Endothelial cell of umbilical vein (primary cell): ENCODE measurements at regions of chr1 and their contacts with region 1.

Region 1: GRCh38 chr1:20633190-20634064 is at the start of gene PINK1:
- DNase-seq: peak; percentile 87
- H3K4me3 ChIP-seq: peak within 1 kb of the TSS; percentile 89 to 95 (median 95)
- H3K27ac ChIP-seq: peak within 1 kb of the TSS; percentile 40
- H3K4me1 ChIP-seq: peaks cover 10% of the 10 kb centered on the region
- H3K27me3 ChIP-seq: no peaks in the 10 kb centered on the region
- CTCF ChIP-seq: peak; percentile 97 to 100
- POLR2A ChIP-seq: peak; percentile 60
- total RNA-seq, gene PINK1: 25.6 and 27.3 TPM in 2 replicates

Region 2: DNA sequence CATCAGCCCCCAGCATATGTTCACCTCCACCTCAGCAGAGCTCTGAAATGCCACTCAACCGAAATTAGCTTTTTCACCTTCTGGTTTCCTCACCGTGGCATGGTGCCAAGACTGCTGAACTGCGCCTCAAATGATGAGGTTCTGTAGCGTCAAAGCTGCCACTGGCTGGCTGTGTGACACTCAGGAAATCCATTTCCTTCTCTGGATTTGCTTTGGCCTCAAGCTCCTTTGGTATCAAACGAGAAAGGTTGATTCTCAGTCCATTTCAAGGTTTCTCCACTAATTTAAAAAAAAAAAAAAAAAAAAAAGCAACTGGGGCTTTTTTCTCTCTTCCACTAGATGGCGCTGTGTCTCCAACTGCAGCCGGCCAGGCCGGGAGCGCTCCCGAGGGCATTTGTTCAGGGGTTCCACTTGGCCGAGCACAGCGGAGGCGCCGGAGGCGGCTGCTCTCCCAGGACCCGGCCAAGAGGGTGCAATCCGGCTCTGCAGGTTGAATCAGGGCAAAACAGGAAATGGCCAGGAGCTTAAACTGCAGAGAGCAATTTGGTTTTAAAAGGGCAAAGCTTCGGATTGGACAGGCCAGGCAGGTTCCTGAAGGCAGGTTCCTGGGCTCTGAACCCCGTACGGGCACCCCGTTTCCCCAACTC is 420.6 kb before region 1 on chr1:
- CTCF ChIA-PET with region 1: interaction called, 5 read pairs
- POLR2A ChIA-PET with region 1: interaction called, 10 read pairs
- dilution Hi-C with region 1: no loop called
- intact Hi-C with region 1: no loop called
- DNase-seq: peak; percentile 39
- H3K4me3 ChIP-seq: no peak overlapping the region
- H3K27ac ChIP-seq: no peak overlapping the region
- H3K4me1 ChIP-seq: no peaks in the 10 kb centered on the region
- H3K27me3 ChIP-seq: peaks cover 7% of the 10 kb centered on the region in 2 experiments
- CTCF ChIP-seq: peak; percentile 76 to 79
- POLR2A ChIP-seq: no peak

Region 3: DNA sequence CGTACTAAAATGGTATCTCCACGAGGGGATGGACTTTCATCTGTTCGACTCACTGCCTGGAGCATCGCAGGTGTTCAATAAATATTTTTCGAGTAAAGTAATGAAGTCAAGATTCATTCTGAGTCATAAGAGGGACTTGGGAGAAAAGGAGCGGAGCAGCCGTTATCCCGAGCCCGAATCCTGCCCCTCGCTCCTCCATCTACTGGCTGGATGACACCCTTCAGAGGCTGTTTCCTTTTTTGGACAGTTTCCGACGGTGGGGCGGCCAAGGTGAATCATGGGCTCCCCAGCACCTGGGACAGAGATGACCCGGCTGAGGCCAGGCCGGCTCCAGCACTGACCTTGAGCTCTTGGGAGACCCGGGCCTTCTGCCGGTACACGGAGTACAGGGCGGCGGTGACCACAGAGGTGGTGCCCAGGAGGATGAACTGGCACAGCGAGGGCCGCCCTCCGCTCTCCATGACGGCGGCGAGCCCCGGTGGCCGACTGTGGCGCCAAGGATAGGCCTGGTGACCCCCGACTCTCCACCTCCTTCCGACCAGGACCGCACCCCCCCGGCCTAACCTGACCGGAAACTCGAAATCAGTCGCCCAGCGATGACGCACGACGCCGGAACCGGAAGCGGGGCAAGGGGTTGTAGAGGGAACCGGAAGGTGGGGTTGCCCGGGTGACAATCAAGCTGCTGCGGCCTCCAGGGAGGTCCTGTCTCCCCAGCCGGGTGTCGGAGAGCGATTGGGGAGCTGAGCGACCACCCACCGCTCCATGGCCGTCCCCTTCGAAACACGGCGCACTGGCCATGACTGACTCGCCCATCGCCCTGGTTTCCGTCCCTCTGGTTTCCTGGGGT is 125.6 kb before region 1 on chr1 and contains the start of gene MUL1:
- CTCF ChIA-PET with region 1: interaction called, 3 read pairs
- POLR2A ChIA-PET with region 1: no interaction called
- dilution Hi-C with region 1: no loop called
- intact Hi-C with region 1: loop called (anchors 5 kb)
- DNase-seq: peak; percentile 88
- H3K4me3 ChIP-seq: peak within 1 kb of the TSS; percentile 70 to 94 (median 94)
- H3K27ac ChIP-seq: peak within 1 kb of the TSS; percentile 80
- H3K4me1 ChIP-seq: peaks cover 11% of the 10 kb centered on the region
- H3K27me3 ChIP-seq: peaks cover 2 to 3% of the 10 kb centered on the region in 2 experiments
- CTCF ChIP-seq: no peak
- POLR2A ChIP-seq: peak; percentile 79
- total RNA-seq, gene MUL1: 23.9 and 28.3 TPM in 2 replicates

Region 4: GRCh38 chr1:20521960-20522861 is 111.2 kb before region 1 on chr1:
- CTCF ChIA-PET with region 1: interaction called, 30 read pairs
- POLR2A ChIA-PET with region 1: no interaction called
- dilution Hi-C with region 1: no loop called
- intact Hi-C with region 1: loop called (anchors 1 kb)
- DNase-seq: peak; percentile 83
- H3K4me3 ChIP-seq: no peak overlapping the region
- H3K27ac ChIP-seq: no peak overlapping the region
- H3K4me1 ChIP-seq: no peaks in the 10 kb centered on the region
- H3K27me3 ChIP-seq: peaks cover 3 to 6% of the 10 kb centered on the region in 2 experiments
- CTCF ChIP-seq: peak; percentile 76 to 88
- POLR2A ChIP-seq: no peak

Region 5: DNA sequence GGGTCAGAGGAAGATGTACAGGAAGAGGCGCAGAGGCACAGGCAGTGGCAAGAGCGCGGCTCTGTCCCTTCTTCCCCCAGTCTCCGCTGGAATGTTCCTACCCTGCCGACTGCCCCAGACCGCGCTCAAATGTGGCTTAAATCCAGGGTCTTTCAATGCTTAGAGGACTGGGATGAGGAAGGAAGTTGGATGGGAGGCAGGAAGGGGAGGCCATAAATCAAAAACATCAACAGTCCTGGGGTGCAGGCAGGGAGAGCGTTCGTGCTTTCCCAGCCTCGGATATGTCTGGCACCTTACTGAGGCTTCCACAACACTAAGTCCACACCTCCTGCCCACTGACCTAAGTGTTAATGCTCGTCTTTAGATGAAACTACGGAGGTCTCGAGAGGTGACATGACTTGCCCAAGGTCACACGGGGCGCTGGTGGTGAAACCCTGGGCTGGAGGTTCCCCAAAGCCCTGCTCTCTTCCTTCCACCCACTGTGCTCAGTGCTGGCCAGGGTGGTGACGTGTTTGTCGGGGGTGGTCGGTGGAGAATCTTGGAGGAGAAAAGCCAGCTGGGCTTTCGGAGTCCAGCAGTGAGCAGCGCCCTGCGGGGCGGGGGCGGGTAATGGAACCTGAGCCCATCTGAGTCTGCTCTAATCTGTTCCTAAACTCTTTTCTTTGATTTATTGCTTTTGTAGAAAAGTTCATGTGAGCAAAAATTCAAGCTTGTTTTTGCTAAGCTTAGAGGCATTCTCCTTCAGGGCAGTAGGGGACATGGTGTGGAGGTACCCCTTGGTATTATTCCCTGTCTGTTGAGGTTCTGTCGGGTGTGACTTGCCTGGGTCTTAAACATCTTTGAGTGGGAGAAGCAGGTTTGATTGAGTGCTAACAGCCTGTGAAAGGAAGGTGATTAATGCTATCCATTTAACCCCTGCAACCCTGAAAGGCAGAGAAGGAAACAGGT is 43.8 kb before region 1 on chr1:
- CTCF ChIA-PET with region 1: interaction called, 11 read pairs
- POLR2A ChIA-PET with region 1: no interaction called
- dilution Hi-C with region 1: no loop called
- intact Hi-C with region 1: no loop called
- DNase-seq: peak; percentile 88
- H3K4me3 ChIP-seq: peak overlapping the region in 1 of 3 experiments; percentile 20
- H3K27ac ChIP-seq: no peak overlapping the region
- H3K4me1 ChIP-seq: peaks cover 15% of the 10 kb centered on the region
- H3K27me3 ChIP-seq: peaks cover 2 to 13% of the 10 kb centered on the region in 2 experiments
- CTCF ChIP-seq: no peak
- POLR2A ChIP-seq: no peak